Calu3 (cell line): ENCODE measurements at regions of chr18 and their contacts with region 1.

Region 1: DNA sequence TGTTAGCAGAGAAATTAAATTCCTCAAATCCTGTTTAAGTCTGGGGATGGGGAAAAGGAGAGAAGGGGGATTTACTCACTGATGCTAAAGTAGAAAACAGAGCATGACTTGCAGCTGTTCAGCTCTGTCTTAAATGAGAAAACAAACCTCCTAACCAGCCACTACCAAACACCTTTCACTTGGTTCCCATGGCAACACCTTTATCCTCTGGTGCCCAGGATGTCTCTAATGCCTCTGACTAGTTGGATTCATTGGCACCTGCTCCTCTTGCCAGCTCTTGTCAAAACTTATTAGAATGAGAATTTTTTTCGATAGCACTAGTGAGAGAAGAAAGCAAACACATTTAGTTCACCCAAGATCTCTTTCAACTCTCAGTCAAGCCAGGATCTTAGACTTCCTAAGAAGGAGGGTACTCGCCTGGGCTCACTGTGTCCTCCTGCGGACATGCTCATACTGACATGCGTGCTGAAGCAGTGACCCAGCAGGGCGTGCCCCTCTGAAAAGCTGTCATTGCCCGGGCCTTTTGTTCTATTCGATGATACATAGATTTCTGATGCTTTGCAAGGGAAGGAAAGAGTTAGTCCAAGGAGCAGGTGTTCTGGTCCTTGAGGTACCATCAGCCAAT is 656.0 kb upstream of the CELF4 start:
- DNase-seq: no peak
- H3K4me3 Mint-ChIP-seq: no peak overlapping the region
- H3K27ac Mint-ChIP-seq: no peak overlapping the region
- H3K4me1 Mint-ChIP-seq: no peaks in the 10 kb centered on the region
- H3K27me3 Mint-ChIP-seq: no peaks in the 10 kb centered on the region
- CTCF ChIP-seq: no peak

Region 2: GRCh38 chr18:39486268-39486667 is 1264.7 kb after region 1 on chr18:
- CTCF ChIA-PET with region 1: interaction called, 10 read pairs
- intact Hi-C with region 1: no loop called
- DNase-seq: no peak
- H3K4me3 Mint-ChIP-seq: no peak overlapping the region
- H3K27ac Mint-ChIP-seq: no peak overlapping the region
- H3K4me1 Mint-ChIP-seq: no peaks in the 10 kb centered on the region
- H3K27me3 Mint-ChIP-seq: no peaks in the 10 kb centered on the region
- CTCF ChIP-seq: no peak